IMR-90 (cell line): ENCODE measurements at regions of chr2 and their contacts with region 1.

Region 1: GRCh38 chr2:148184976-148185375 is 164.1 kb downstream of the MBD5 start:
- DNase-seq: no peak
- ATAC-seq: no peak
- H3K4me3 ChIP-seq: no peak overlapping the region
- H3K27ac ChIP-seq: no peak overlapping the region
- H3K4me1 ChIP-seq: no peaks in the 10 kb centered on the region
- H3K27me3 ChIP-seq: no peaks in the 10 kb centered on the region
- CTCF ChIP-seq: no peak
- POLR2A ChIP-seq: no peak
- RAD21 ChIP-seq: no peak

Region 2: GRCh38 chr2:147937744-147938349 is 247.1 kb before region 1 on chr2:
- CTCF ChIA-PET with region 1: no interaction called
- POLR2A ChIA-PET with region 1: no interaction called
- dilution Hi-C with region 1: no loop called
- in situ Hi-C with region 1: no loop called
- intact Hi-C with region 1: no loop called
- DNase-seq: peak; percentile 40
- ATAC-seq: peak; percentile 83
- H3K4me3 ChIP-seq: no peak overlapping the region
- H3K27ac ChIP-seq: no peak overlapping the region
- H3K4me1 ChIP-seq: no peaks in the 10 kb centered on the region
- H3K27me3 ChIP-seq: no peaks in the 10 kb centered on the region
- CTCF ChIP-seq: peak; percentile 84
- POLR2A ChIP-seq: no peak
- RAD21 ChIP-seq: peak; percentile 73

Region 3: DNA sequence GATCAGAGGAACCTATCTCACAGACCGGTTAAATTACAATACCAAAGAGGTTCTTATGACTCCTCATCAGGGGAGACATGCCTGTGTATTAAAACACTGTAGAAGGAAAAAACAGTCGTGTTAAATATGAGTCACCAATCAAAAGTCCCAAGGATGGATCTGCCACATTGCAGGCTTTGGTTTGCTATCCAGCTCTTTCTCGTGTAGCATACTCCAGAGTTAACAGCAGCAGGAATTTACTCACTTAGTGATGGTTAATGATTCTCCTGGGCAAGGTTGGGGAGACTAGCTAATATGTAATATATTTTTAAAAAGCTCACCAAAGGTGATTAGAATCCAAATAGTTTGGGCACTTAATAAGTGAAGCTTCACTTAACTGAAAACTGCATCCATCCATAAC is 54.4 kb before region 1 on chr2:
- CTCF ChIA-PET with region 1: no interaction called
- POLR2A ChIA-PET with region 1: no interaction called
- dilution Hi-C with region 1: no loop called
- in situ Hi-C with region 1: no loop called
- intact Hi-C with region 1: loop called (anchors 10 kb)
- DNase-seq: peak; percentile 77
- ATAC-seq: peak; percentile 81
- H3K4me3 ChIP-seq: no peak overlapping the region
- H3K27ac ChIP-seq: no peak overlapping the region
- H3K4me1 ChIP-seq: peaks cover 3% of the 10 kb centered on the region
- H3K27me3 ChIP-seq: no peaks in the 10 kb centered on the region
- CTCF ChIP-seq: no peak
- POLR2A ChIP-seq: no peak
- RAD21 ChIP-seq: no peak

Region 4: GRCh38 chr2:148338541-148338940 is 153.6 kb after region 1 on chr2:
- CTCF ChIA-PET with region 1: no interaction called
- POLR2A ChIA-PET with region 1: no interaction called
- dilution Hi-C with region 1: no loop called
- in situ Hi-C with region 1: no loop called
- intact Hi-C with region 1: no loop called
- DNase-seq: peak; percentile 87
- ATAC-seq: peak; percentile 99
- H3K4me3 ChIP-seq: no peak overlapping the region
- H3K27ac ChIP-seq: peak overlapping the region; percentile 63; the same call in 1 of the 2 replicates
- H3K4me1 ChIP-seq: peaks cover 3% of the 10 kb centered on the region
- H3K27me3 ChIP-seq: no peaks in the 10 kb centered on the region
- CTCF ChIP-seq: no peak
- POLR2A ChIP-seq: no peak
- RAD21 ChIP-seq: no peak